MCF 10A (cell line): ENCODE measurements at regions of chr11 and their contacts with region 1.

Region 1: GRCh38 chr11:66480117-66480938 is at the start of gene DPP3:
- DNase-seq: peak; percentile 98
- H3K4me3 Mint-ChIP-seq: peak within 1 kb of the TSS; percentile 96
- H3K27ac Mint-ChIP-seq: peak within 1 kb of the TSS; percentile 95
- H3K4me1 Mint-ChIP-seq: peaks cover 23% of the 10 kb centered on the region
- H3K27me3 Mint-ChIP-seq: no peaks in the 10 kb centered on the region
- CTCF ChIP-seq: no peak
- total RNA-seq, gene DPP3: 34.4 and 40.9 TPM in 2 replicates

Region 2: GRCh38 chr11:66408488-66409214 is 71.7 kb before region 1 on chr11:
- CTCF ChIA-PET with region 1: interaction called, 8 read pairs
- POLR2A ChIA-PET with region 1: interaction called, 4 read pairs
- intact Hi-C with region 1: loop called (anchors 1 kb)
- DNase-seq: peak; percentile 83
- H3K4me3 Mint-ChIP-seq: peak overlapping the region; percentile 56
- H3K27ac Mint-ChIP-seq: no peak overlapping the region
- H3K4me1 Mint-ChIP-seq: no peaks in the 10 kb centered on the region
- H3K27me3 Mint-ChIP-seq: peaks cover 64% of the 10 kb centered on the region
- CTCF ChIP-seq: peak; percentile 100

Region 3: GRCh38 chr11:66466225-66467027 is 13.9 kb before region 1 on chr11 and contains the start of gene PELI3:
- CTCF ChIA-PET with region 1: interaction called, 9 read pairs
- POLR2A ChIA-PET with region 1: interaction called, 65 read pairs
- intact Hi-C with region 1: no loop called
- DNase-seq: peak; percentile 89
- H3K4me3 Mint-ChIP-seq: peak within 1 kb of the TSS; percentile 75
- H3K27ac Mint-ChIP-seq: peak within 1 kb of the TSS; percentile 54
- H3K4me1 Mint-ChIP-seq: no peaks in the 10 kb centered on the region
- H3K27me3 Mint-ChIP-seq: no peaks in the 10 kb centered on the region
- CTCF ChIP-seq: no peak
- total RNA-seq, gene PELI3: 5.0 and 6.1 TPM in 2 replicates

Region 4: DNA sequence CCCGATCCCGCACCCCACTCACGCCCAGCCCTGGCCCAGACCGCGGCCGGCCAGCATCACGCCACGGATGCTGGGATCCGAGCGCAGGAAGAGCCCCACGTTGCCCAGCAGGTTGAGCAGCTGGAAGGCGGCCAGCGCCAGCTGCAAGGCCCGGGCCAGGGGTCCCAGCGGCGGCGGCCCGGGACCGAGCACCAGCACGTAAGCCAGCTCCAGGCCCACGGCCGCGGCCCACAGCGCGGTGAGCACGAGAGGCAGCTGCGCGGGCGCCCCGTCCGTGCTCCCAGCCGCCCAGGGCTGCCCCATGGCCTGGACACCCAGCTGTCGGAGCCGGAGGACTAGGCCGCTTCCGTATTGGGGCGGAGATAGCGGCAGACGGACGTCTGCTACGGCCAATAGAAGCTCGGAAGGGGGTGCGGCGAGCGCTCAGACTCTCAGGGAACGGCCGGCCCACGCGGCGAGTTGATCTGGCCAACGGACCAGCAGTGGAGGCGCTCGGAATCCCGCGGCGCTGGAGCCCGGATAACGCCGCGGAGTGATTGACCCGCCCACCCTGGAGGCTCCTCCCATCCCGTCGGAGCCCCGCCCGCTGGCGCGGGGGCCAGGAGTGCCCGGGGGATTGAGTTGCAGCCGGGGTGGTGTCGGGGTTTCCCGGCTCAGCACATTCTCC is 65.5 kb after region 1 on chr11 and contains the start of gene ZDHHC24:
- CTCF ChIA-PET with region 1: no interaction called
- POLR2A ChIA-PET with region 1: interaction called, 10 read pairs
- intact Hi-C with region 1: no loop called
- DNase-seq: peak; percentile 98
- H3K4me3 Mint-ChIP-seq: peak within 1 kb of the TSS; percentile 78
- H3K27ac Mint-ChIP-seq: peak within 1 kb of the TSS; percentile 92
- H3K4me1 Mint-ChIP-seq: peaks cover 41% of the 10 kb centered on the region
- H3K27me3 Mint-ChIP-seq: peaks cover 15% of the 10 kb centered on the region
- CTCF ChIP-seq: no peak
- total RNA-seq, gene ZDHHC24: 11.1 and 12.4 TPM in 2 replicates

Region 5: GRCh38 chr11:66616379-66617154 is 136.2 kb after region 1 on chr11 and contains the start of gene RBM14:
- CTCF ChIA-PET with region 1: interaction called, 3 read pairs
- POLR2A ChIA-PET with region 1: interaction called, 17 read pairs
- intact Hi-C with region 1: loop called (anchors 5 kb)
- DNase-seq: peak; percentile 99
- H3K4me3 Mint-ChIP-seq: peak within 1 kb of the TSS; percentile 86
- H3K27ac Mint-ChIP-seq: peak within 1 kb of the TSS; percentile 96
- H3K4me1 Mint-ChIP-seq: peaks cover 20% of the 10 kb centered on the region
- H3K27me3 Mint-ChIP-seq: no peaks in the 10 kb centered on the region
- CTCF ChIP-seq: no peak
- total RNA-seq, gene RBM14: 78.1 and 88.3 TPM in 2 replicates